ENCODE measurements at regions of chr11 and their contacts with region 1.

Region 1: DNA sequence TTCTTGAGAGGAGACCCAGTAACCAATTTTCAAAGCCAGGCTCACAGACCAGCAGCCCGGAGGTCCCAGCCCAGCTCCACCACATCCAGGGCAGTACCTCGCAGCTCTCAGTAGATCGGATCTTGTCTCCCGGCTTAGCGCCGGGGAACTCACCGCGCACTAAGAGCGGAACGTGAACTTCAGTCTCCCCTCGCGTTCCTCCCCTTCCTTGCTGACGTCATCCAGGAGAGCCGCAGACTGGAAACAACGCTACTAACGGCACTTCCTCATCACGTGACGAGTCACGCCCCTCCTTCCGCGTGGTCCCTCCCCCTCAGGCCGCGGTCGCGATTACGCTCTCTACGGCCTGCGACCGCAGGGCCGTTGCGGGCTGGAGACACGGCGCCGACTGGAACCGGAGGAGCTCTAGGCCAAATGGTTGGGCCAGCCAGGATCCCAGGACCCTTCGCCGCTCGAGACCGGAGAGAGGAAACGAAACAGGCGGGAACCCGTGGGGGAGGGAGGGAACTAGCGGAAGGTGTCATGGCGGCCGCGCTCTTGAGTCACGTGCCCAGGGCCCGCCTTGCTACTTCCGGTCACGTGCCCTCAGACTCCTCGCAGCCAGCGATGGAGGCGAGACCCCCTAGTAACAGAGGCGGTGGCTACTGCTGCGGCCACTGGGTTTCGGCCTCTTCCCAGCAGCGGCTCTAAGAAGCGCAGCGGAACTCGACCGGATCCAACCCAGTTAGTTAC is at the starts of genes GTF2H1 and HPS5:
- DNase-seq: peak; percentile 96 to 99
- H3K4me3 ChIP-seq: peak within 1 kb of the TSS; percentile 80 to 90 (median 84)
- H3K27ac ChIP-seq: peak within 1 kb of the TSS; percentile 91 to 99 (median 96)
- H3K4me1 ChIP-seq: peaks cover 34 to 65% (median 46%) of the 10 kb centered on the region in 4 donors
- H3K27me3 ChIP-seq: no peaks in the 10 kb centered on the region
- CTCF ChIP-seq: no peak
- EP300 ChIP-seq: peak; percentile 87
- POLR2A ChIP-seq: peak in 2 of 4 donors; percentile 91 to 97
- total RNA-seq, gene GTF2H1: 7.8 to 76.4 (median 54.3) TPM
- total RNA-seq, gene HPS5: 5.2 to 61.3 (median 44.2) TPM

Region 2: GRCh38 chr11:18371279-18371678 is 49.1 kb after region 1 on chr11:
- intact Hi-C with region 1: loop called (anchors 10 kb)
- DNase-seq: peak in 1 of 2 donors; percentile 47
- H3K4me3 ChIP-seq: no peak overlapping the region
- H3K27ac ChIP-seq: no peak overlapping the region
- H3K4me1 ChIP-seq: no peaks in the 10 kb centered on the region
- H3K27me3 ChIP-seq: no peaks in the 10 kb centered on the region
- CTCF ChIP-seq: no peak
- EP300 ChIP-seq: no peak
- POLR2A ChIP-seq: no peak

Region 3: GRCh38 chr11:18617688-18618341 is 295.7 kb after region 1 on chr11:
- intact Hi-C with region 1: no loop called
- DNase-seq: peak in 1 of 2 donors; percentile 22
- H3K4me3 ChIP-seq: no peak overlapping the region
- H3K27ac ChIP-seq: peak overlapping the region in 3 of 5 donors; percentile 47 to 57 (median 55)
- H3K4me1 ChIP-seq: peaks cover 9 to 43% (median 25%) of the 10 kb centered on the region in 4 donors
- H3K27me3 ChIP-seq: no peaks in the 10 kb centered on the region
- CTCF ChIP-seq: no peak
- EP300 ChIP-seq: no peak
- POLR2A ChIP-seq: no peak

Measured in stomach (tissue), 19 donors.